Thyroid gland (tissue), 4 donors: ENCODE measurements at regions of chr4 and their contacts with region 1.

Region 1: DNA sequence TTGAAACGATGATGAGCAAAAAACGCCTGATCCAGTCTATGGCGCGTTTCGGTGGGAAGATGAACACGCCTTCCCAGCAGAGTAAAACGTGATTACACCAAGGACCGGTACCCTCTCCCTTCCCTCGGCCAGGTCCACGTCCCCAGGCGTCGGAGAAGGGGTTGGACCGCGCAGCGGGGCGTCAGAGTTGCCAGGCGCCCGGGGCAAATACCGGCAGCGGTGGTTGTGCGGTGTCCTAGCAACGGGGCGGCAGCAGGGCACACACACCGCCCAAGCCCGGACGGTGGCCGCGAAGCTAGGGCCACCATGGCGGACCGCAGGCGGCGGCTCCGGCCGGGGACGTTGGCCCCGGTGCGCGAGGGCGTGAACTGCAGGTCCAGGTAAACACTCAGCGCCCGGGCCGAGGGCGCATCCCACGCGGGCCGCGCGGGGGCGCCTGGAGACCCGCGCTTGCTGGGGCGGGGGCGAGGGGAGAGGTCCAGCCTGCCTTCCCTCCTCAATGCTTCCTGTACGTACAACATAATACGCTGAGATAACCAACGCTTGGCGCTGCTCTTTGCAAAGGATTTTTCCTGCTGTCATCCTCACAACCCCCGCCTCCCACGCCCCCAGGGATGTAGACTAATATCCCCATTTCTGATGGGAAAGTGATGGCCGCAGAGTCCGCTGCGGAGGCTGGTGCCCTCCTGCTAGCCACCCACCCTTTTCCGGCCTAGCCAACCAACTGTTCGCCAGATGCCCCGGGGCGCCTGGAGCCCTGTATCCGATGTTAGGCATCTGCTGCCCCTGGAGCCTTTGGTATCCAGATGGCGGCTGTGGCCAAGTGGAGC is at the start of gene FAM47E:
- DNase-seq: peak; percentile 91 to 92
- H3K4me3 ChIP-seq: peak within 1 kb of the TSS; percentile 27 to 50 (median 40)
- H3K27ac ChIP-seq: peak within 1 kb of the TSS; percentile 44 to 81 (median 61)
- H3K4me1 ChIP-seq: peaks cover 7 to 8% of the 10 kb centered on the region in 2 donors
- H3K27me3 ChIP-seq: no peaks in the 10 kb centered on the region
- CTCF ChIP-seq: peak in 5 of 6 experiments; percentile 10 to 47 (median 15)
- POLR2A ChIP-seq: peak in 1 of 2 donors; percentile 62
- total RNA-seq, gene FAM47E: 9.7 to 16.9 (median 13.7) TPM

Region 2: GRCh38 chr4:76198411-76199237 is 53.0 kb before region 1 on chr4:
- intact Hi-C with region 1: loop called (anchors 10 kb)
- DNase-seq: peak; percentile 84 to 85
- H3K4me3 ChIP-seq: no peak overlapping the region
- H3K27ac ChIP-seq: peak overlapping the region; percentile 76 to 85 (median 84)
- H3K4me1 ChIP-seq: peaks cover 57 to 89% of the 10 kb centered on the region in 2 donors
- H3K27me3 ChIP-seq: no peaks in the 10 kb centered on the region
- CTCF ChIP-seq: no peak
- POLR2A ChIP-seq: no peak

Region 3: DNA sequence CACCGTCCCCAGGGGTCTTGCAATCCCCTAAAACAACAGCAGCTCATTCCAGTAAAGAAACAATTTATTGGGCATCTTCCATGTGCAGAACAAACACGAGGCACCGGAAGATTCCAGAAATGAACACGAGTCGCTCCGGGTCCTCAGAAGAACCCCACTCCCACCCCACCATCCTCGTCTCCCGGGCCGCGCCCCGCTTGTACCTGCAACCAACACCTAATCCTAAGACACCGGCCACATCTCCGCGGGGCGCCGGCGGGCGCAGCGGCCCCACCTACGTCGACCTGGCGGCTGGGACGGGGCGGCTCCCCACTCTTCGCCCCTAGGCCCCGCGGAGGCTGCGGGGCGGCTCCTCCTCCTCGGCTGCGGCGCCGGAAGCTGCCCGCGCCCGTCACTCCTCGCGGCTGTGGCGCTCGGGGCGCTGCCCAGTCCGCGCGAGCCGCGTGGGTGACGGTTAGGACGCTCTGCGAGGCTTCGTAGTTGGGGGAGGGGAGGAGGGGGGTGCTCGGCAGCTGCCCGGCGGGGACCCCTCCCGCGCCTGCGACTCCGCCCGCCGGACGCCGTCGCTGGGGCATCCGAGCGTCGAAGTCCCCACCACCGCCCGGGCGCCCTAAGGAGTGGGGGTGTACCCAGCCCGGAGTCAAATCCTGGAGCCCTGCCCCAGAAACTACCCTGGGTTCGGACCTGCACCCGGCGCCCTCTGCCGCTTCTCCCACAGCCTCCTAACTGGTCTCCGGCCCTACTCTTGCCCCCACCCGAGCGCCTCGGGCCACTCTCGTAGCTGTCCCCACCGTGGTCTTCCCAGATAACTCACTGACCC is 169.3 kb after region 1 on chr4 and contains the start of gene CCDC158:
- intact Hi-C with region 1: no loop called
- DNase-seq: peak; percentile 34 to 47
- H3K4me3 ChIP-seq: peak within 1 kb of the TSS; percentile 22 to 58 (median 38)
- H3K27ac ChIP-seq: peak within 1 kb of the TSS in 2 of 3 donors; percentile 33 to 39
- H3K4me1 ChIP-seq: peaks cover 3 to 5% of the 10 kb centered on the region in 2 donors
- H3K27me3 ChIP-seq: no peaks in the 10 kb centered on the region
- CTCF ChIP-seq: peak in 1 of 6 experiments; percentile 6
- POLR2A ChIP-seq: peak in 1 of 2 donors; percentile 43
- total RNA-seq, gene CCDC158: 2.0 to 5.8 (median 3.5) TPM